ENCODE measurements at regions of chr11 and their contacts with region 1.

Region 1: GRCh38 chr11:119057000-119057769 is at the start of gene HYOU1:
- DNase-seq: peak; percentile 97 to 99 (median 98)
- ATAC-seq: peak; percentile 96
- H3K4me3 ChIP-seq: peak within 1 kb of the TSS; percentile 82 to 83
- H3K4me3 Mint-ChIP-seq: peak within 1 kb of the TSS; percentile 96
- H3K27ac ChIP-seq: peak within 1 kb of the TSS; percentile 81 to 85
- H3K27ac Mint-ChIP-seq: peak within 1 kb of the TSS; percentile 96
- H3K4me1 ChIP-seq: peaks cover 21% of the 10 kb centered on the region
- H3K4me1 Mint-ChIP-seq: peaks cover 35% of the 10 kb centered on the region
- H3K27me3 ChIP-seq: no peaks in the 10 kb centered on the region
- H3K27me3 Mint-ChIP-seq: no peaks in the 10 kb centered on the region
- CTCF ChIP-seq: no peak
- total RNA-seq, gene HYOU1: 106 to 109 TPM

Region 2: DNA sequence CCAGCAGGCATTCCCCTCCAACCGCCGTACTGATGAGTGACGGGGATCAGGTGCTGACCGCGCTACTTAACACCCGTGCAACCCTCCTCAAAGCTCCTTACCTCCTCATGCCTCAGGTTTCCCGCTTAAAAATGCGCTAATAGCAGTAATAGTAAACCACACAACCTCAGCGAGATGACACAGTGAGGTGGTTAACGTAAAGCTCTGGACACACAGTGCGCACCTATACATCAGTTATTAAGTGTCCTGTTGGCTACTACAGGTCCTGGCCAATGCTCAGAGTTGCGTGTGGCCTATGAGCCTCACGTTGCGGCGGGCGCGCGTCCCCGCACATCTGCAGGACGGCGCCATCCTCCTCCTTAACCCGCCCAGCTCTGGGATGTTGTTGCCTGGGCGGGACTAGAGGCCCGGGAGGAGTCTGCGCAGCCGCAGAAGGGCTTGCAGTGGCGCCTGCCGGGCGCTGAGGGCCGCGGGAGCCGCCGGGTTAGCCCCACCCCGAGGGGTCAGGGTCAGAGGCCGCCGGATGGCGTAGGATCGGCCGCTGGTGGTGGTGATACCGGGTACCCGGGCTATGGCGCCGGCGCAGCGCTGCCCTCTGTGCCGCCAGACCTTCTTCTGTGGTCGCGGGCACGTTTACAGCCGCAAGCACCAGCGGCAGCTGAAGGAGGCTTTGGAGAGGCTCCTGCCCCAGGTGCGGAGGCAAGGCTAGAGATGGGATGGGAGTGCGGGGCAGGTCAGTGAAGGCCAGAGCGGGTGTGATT is 59.4 kb before region 1 on chr11 and contains the start of gene CENATAC:
- CTCF ChIA-PET with region 1: interaction called, 3 read pairs
- POLR2A ChIA-PET with region 1: interaction called, 3 read pairs
- intact Hi-C with region 1: loop called in 1 of 2 experiments (anchors 1 kb)
- DNase-seq: peak; percentile 87 to 97 (median 96)
- ATAC-seq: peak; percentile 94
- H3K4me3 ChIP-seq: peak within 1 kb of the TSS; percentile 89 to 95
- H3K4me3 Mint-ChIP-seq: peak within 1 kb of the TSS; percentile 84
- H3K27ac ChIP-seq: peak within 1 kb of the TSS; percentile 59 to 92
- H3K27ac Mint-ChIP-seq: peak within 1 kb of the TSS; percentile 88
- H3K4me1 ChIP-seq: peaks cover 23% of the 10 kb centered on the region
- H3K4me1 Mint-ChIP-seq: peaks cover 36% of the 10 kb centered on the region
- H3K27me3 ChIP-seq: no peaks in the 10 kb centered on the region
- H3K27me3 Mint-ChIP-seq: no peaks in the 10 kb centered on the region
- CTCF ChIP-seq: no peak
- total RNA-seq, gene CENATAC: 103 to 116 TPM

Region 3: DNA sequence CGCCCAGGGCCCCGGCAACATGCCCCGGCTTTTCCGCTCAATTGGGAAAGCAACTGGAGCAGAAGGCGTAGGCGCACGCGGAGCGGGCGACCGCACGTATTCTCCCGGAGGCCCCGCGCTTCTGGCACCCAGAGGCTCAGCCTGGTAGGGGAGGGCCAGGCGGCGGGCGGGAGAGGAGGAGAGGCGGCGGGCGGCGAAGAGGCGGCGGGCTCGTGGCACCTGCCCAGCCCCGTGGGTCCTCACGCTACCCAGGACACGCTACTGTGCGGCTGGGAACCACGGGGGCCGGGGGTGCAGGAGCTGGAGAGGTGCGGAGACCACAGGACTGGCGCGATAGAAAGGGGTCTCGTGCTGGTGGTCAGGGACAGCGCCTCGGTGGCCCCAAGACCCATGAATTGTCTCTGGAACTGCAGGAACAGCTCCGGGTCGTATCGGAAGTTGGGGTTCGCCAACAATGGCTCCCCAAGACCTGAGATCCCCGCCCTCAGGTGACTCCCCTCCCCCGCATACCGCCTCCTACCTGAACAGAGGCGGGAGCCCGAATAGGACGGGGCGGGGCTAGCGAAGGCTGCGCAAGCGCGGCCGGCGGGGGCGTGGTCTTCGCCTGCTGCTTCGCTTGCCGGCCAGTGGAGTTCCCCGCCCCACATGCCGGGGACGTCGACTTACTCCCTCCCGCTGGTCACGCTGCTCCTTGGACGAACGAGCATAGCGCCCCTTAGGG is 26.7 kb before region 1 on chr11 and contains the start of gene SLC37A4:
- CTCF ChIA-PET with region 1: interaction called, 4 read pairs
- POLR2A ChIA-PET with region 1: no interaction called
- intact Hi-C with region 1: loop called (anchors 1 to 2 kb)
- DNase-seq: peak; percentile 97 to 100 (median 99)
- ATAC-seq: peak; percentile 93
- H3K4me3 ChIP-seq: peak within 1 kb of the TSS; percentile 94 to 99
- H3K4me3 Mint-ChIP-seq: peak within 1 kb of the TSS; percentile 89
- H3K27ac ChIP-seq: peak within 1 kb of the TSS; percentile 65 to 71
- H3K27ac Mint-ChIP-seq: peak within 1 kb of the TSS; percentile 88
- H3K4me1 ChIP-seq: peaks cover 13% of the 10 kb centered on the region
- H3K4me1 Mint-ChIP-seq: peaks cover 18% of the 10 kb centered on the region
- H3K27me3 ChIP-seq: no peaks in the 10 kb centered on the region
- H3K27me3 Mint-ChIP-seq: no peaks in the 10 kb centered on the region
- CTCF ChIP-seq: peak; percentile 34
- total RNA-seq, gene SLC37A4: 4.0 to 4.6 TPM

Region 4: DNA sequence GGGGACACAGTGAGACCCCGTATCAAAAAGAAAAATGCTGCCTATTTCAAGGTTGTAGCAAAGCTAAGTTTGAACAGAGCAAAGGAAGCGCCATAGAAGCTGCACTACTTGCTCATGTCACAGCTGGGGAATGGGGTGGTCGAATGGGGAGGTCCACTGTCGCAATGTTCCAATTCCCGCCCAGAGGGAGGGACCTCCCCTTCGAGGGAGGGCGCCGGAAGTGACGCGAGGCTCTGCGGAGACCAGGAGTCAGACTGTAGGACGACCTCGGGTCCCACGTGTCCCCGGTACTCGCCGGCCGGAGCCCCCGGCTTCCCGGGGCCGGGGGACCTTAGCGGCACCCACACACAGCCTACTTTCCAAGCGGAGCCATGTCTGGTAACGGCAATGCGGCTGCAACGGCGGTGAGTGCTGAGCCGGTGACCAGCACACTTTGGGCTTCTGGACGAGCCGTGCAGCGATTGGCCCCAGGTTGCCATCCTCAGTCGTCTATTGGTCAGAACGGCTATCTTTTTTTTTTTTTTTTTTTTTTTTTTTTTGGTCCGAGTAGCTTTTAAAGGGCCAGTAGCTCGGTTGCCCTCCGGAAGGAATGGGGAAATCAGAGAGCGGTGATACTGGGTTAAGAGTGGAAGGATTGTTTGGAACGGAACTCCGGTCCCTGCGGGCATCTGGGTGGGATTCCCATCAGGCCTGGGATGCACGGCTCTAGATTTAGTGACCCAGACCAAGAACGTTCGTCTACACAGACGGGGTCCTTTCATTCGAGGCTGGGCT is 27.7 kb after region 1 on chr11 and contains the start of gene HMBS:
- CTCF ChIA-PET with region 1: no interaction called
- POLR2A ChIA-PET with region 1: interaction called, 3 read pairs
- intact Hi-C with region 1: loop called in 1 of 2 experiments (anchors 1 kb)
- DNase-seq: peak; percentile 78 to 97 (median 92)
- ATAC-seq: peak; percentile 93
- H3K4me3 ChIP-seq: peak within 1 kb of the TSS; percentile 92
- H3K4me3 Mint-ChIP-seq: peak within 1 kb of the TSS; percentile 91
- H3K27ac ChIP-seq: peak within 1 kb of the TSS; percentile 75 to 86
- H3K27ac Mint-ChIP-seq: peak within 1 kb of the TSS; percentile 93
- H3K4me1 ChIP-seq: peaks cover 18% of the 10 kb centered on the region
- H3K4me1 Mint-ChIP-seq: peaks cover 20% of the 10 kb centered on the region
- H3K27me3 ChIP-seq: no peaks in the 10 kb centered on the region
- H3K27me3 Mint-ChIP-seq: no peaks in the 10 kb centered on the region
- CTCF ChIP-seq: no peak
- total RNA-seq, gene HMBS: 5.4 to 6.4 TPM

Region 5: GRCh38 chr11:119101759-119102423 is 44.7 kb after region 1 on chr11 and contains the start of gene DPAGT1:
- CTCF ChIA-PET with region 1: no interaction called
- POLR2A ChIA-PET with region 1: interaction called, 11 read pairs
- intact Hi-C with region 1: loop called in 1 of 2 experiments (anchors 1 kb)
- DNase-seq: peak; percentile 68 to 93 (median 84)
- ATAC-seq: peak; percentile 87
- H3K4me3 ChIP-seq: peak within 1 kb of the TSS; percentile 81 to 87
- H3K4me3 Mint-ChIP-seq: peak within 1 kb of the TSS; percentile 98
- H3K27ac ChIP-seq: peak within 1 kb of the TSS; percentile 94 to 97
- H3K27ac Mint-ChIP-seq: peak within 1 kb of the TSS; percentile 97
- H3K4me1 ChIP-seq: peaks cover 31% of the 10 kb centered on the region
- H3K4me1 Mint-ChIP-seq: peaks cover 53% of the 10 kb centered on the region
- H3K27me3 ChIP-seq: no peaks in the 10 kb centered on the region
- H3K27me3 Mint-ChIP-seq: no peaks in the 10 kb centered on the region
- CTCF ChIP-seq: no peak
- total RNA-seq, gene DPAGT1: 9.4 to 9.9 TPM

Region 6: GRCh38 chr11:119121008-119121810 is 64.0 kb after region 1 on chr11 and contains the start of gene HINFP:
- CTCF ChIA-PET with region 1: interaction called, 3 read pairs
- POLR2A ChIA-PET with region 1: interaction called, 3 read pairs
- intact Hi-C with region 1: loop called in 1 of 2 experiments (anchors 1 kb)
- DNase-seq: peak; percentile 100
- ATAC-seq: peak; percentile 97
- H3K4me3 ChIP-seq: peak within 1 kb of the TSS; percentile 81 to 93
- H3K4me3 Mint-ChIP-seq: peak within 1 kb of the TSS; percentile 87
- H3K27ac ChIP-seq: peak within 1 kb of the TSS; percentile 69 to 80
- H3K27ac Mint-ChIP-seq: peak within 1 kb of the TSS; percentile 92
- H3K4me1 ChIP-seq: peaks cover 24% of the 10 kb centered on the region
- H3K4me1 Mint-ChIP-seq: peaks cover 43% of the 10 kb centered on the region
- H3K27me3 ChIP-seq: no peaks in the 10 kb centered on the region
- H3K27me3 Mint-ChIP-seq: no peaks in the 10 kb centered on the region
- CTCF ChIP-seq: no peak
- total RNA-seq, gene HINFP: 17.0 to 19.5 TPM

Measured in CD8-positive, alpha-beta T cell (primary cell).